SK-N-SH (cell line): ENCODE measurements at regions of chr22 and their contacts with region 1.

Region 1: DNA sequence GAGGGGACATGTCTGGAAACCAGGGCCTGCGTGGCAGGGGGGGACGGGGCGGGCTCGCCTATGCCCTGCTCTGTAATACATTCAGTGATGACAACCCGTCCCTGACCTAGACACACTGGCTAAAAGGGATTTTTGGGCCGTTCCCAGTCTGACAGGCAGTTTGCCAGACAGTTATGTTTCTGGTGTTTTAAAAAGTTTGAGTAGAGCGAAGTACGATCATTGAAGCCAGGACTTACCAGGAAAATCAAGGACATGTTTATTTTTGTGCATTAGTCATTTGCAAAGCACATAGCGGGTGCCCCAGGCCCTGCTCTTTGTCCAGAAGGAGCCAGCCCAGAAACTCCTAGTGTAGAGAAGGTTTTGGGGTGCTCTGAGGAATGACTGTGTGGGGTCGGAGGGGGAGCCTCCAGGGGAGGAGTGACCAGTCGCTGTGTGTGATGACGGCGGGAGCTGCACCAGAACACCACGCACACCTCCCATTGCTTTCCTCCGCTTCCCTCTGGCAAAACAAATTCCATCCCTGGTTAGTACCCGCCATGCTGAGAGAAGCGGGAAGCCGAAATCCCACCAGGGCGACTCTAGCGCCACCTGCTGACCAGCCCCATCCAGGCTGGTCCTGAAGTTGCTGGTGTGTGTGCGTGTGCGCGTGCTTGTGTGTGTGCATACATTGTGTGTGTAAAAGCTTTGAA is 50.8 kb downstream of the FBLN1 start:
- DNase-seq: peak; percentile 95
- H3K4me3 ChIP-seq: peak overlapping the region in 1 of 2 experiments; percentile 28; a peak in 1 of 4 replicates
- H3K27ac ChIP-seq: peak overlapping the region; percentile 59 to 82
- H3K4me1 ChIP-seq: peaks cover 0 to 18% of the 10 kb centered on the region in 2 experiments; a peak in 1 of 4 replicates
- H3K27me3 ChIP-seq: no peaks in the 10 kb centered on the region
- CTCF ChIP-seq: peak; percentile 98
- EP300 ChIP-seq: no peak
- RAD21 ChIP-seq: peak; percentile 98

Region 2: GRCh38 chr22:45268958-45269844 is 284.3 kb before region 1 on chr22:
- CTCF ChIA-PET with region 1: interaction called, 23 read pairs
- POLR2A ChIA-PET with region 1: interaction called, 3 read pairs
- DNase-seq: peak; percentile 93
- H3K4me3 ChIP-seq: peak overlapping the region; percentile 62 to 79
- H3K27ac ChIP-seq: peak overlapping the region; percentile 42 to 90; a peak in 3 of 4 replicates
- H3K4me1 ChIP-seq: peaks cover 0 to 5% of the 10 kb centered on the region in 2 experiments; a peak in 1 of 4 replicates
- H3K27me3 ChIP-seq: no peaks in the 10 kb centered on the region
- CTCF ChIP-seq: peak; percentile 81
- EP300 ChIP-seq: no peak
- RAD21 ChIP-seq: peak; percentile 86

Region 3: DNA sequence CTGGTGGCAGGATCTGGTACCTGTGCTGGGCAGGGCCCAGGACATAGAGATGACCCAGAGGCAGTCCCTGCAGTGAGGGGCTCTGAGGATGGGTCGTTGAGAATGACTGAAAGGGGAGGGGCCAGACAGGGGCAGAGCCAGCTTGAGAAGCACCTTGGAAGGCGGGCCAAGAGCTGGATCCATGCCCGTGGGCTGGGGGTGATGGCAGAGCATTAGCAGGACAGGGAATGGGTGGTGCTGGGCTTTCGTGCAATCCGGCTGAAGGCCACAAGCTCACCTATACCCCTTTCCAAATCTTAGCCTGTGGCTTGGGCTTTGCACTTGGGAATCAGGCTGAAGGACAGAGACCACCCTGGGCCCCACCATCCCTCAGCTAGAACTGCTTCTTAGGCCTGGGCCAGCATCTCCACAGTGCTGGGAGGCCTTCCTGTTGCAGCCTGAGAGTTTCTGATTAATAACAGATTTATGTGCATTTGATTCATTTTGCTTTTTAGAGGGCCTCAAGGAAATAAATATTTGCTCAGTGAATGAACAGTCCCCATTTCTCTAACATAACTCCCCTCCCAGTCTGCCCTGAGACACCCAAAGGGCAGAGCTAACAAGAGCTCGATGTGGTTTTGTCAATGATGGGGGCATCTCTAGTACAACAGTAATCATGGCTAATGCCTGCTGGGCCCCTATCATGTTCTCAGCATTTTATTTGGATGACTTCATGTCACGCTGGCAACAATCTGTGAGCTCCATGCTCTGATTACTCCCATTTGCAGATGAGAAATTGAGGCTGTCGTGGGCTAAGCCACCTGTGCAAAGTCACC is 100.7 kb before region 1 on chr22:
- CTCF ChIA-PET with region 1: interaction called, 16 read pairs
- POLR2A ChIA-PET with region 1: no interaction called
- DNase-seq: no peak
- H3K4me3 ChIP-seq: no peak overlapping the region
- H3K27ac ChIP-seq: peak overlapping the region; percentile 29 to 89
- H3K4me1 ChIP-seq: peaks cover 20 to 33% of the 10 kb centered on the region in 2 experiments; a peak in 3 of 4 replicates
- H3K27me3 ChIP-seq: no peaks in the 10 kb centered on the region
- CTCF ChIP-seq: no peak
- EP300 ChIP-seq: peak in 1 of 2 experiments; percentile 60; a peak in 1 of 4 replicates
- RAD21 ChIP-seq: no peak

Region 4: DNA sequence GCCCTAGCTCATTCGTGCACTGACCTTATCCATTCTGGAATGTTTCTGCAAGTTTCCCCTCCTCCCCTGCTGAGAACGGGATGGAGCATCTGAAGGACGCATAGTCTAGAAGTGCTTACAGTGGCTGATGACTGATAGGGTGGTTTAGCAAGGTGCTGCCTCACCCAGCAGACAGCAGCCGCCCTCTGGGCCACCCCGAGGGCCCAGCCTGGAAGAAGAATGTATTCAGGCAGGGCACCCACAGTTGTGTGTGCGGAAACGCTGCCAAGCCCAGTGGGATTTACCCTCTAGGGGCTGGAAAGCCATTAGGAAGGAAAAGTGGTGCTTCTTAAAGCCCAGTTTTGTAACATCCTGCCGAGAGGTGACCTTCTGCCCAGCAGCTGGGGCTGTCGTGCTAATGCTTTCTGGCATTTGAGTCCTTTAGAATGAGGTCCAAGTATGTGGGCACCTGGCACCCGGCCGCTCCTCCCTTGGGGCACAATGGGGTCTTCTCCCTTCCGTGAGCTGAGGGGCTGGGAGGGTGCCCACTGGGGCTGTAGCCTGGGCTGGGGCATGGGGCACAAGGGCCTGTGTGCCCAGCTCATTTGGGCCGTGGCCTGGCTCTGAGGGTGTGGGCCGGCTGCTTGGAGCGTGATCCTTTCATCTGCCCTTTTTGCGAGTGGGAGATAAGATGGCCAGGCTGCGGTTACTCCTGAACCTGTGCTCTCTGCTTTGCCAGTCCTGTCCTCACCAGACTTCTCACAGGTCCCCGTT is 36.4 kb before region 1 on chr22:
- CTCF ChIA-PET with region 1: interaction called, 16 read pairs
- POLR2A ChIA-PET with region 1: no interaction called
- DNase-seq: no peak
- H3K4me3 ChIP-seq: no peak overlapping the region
- H3K27ac ChIP-seq: peak overlapping the region in 1 of 2 experiments; percentile 86; a peak in 2 of 4 replicates
- H3K4me1 ChIP-seq: peaks cover 0 to 42% of the 10 kb centered on the region in 2 experiments; a peak in 2 of 4 replicates
- H3K27me3 ChIP-seq: no peaks in the 10 kb centered on the region
- CTCF ChIP-seq: no peak
- EP300 ChIP-seq: no peak
- RAD21 ChIP-seq: no peak

Region 5: DNA sequence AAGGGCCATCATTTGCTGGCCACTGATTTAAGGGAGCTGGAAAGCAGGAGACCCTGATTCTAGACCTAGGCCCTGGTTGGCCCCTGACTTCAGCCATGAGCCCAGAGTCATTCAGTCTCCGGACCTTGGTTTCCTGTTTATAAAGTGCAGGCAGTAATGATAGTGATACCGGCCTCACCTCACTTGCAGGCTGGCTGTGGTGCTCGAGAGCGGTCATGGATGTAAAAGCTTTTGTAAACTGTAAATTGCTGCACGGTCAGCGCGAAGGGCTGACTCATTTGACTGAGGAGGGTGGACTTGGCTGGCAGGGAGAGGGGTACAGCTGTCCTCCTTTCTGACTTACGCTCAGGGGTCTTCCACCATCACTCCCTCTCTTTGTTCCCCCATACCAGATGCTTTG is 13.4 kb before region 1 on chr22:
- CTCF ChIA-PET with region 1: interaction called, 21 read pairs
- POLR2A ChIA-PET with region 1: no interaction called
- DNase-seq: no peak
- H3K4me3 ChIP-seq: no peak overlapping the region
- H3K27ac ChIP-seq: no peak overlapping the region
- H3K4me1 ChIP-seq: peaks cover 6 to 17% of the 10 kb centered on the region in 2 experiments; a peak in 2 of 4 replicates
- H3K27me3 ChIP-seq: no peaks in the 10 kb centered on the region
- CTCF ChIP-seq: no peak
- EP300 ChIP-seq: no peak
- RAD21 ChIP-seq: no peak